Activated T-helper 1 cell treated with anti-CD3 and anti-CD28 coated beads, Interleukin-12 subunit alpha, Interleukin-12 subunit beta, Interleukin-2, Interleukin-4 antibody, amounts not matched to agents 30 ng/mL and 10 ng/mL and 1 ng/mL, durations not matched to agents 14 hours and 24 hours and 36 hours (primary cell): ENCODE measurements at regions of chrX and their contacts with region 1.

Region 1: GRCh38 chrX:78555401-78555980 is 103.6 kb downstream of the RTL3 start:
- DNase-seq: no peak
- H3K4me3 Mint-ChIP-seq: no peak overlapping the region
- H3K27ac Mint-ChIP-seq: peak overlapping the region; percentile 61
- H3K4me1 Mint-ChIP-seq: peaks cover 5% of the 10 kb centered on the region
- H3K27me3 Mint-ChIP-seq: no peaks in the 10 kb centered on the region

Region 2: GRCh38 chrX:78493180-78493579 is 62.3 kb before region 1 on chrX:
- intact Hi-C with region 1: no loop called
- DNase-seq: no peak
- H3K4me3 Mint-ChIP-seq: no peak overlapping the region
- H3K27ac Mint-ChIP-seq: no peak overlapping the region
- H3K4me1 Mint-ChIP-seq: peaks cover 6% of the 10 kb centered on the region
- H3K27me3 Mint-ChIP-seq: no peaks in the 10 kb centered on the region

Region 3: DNA sequence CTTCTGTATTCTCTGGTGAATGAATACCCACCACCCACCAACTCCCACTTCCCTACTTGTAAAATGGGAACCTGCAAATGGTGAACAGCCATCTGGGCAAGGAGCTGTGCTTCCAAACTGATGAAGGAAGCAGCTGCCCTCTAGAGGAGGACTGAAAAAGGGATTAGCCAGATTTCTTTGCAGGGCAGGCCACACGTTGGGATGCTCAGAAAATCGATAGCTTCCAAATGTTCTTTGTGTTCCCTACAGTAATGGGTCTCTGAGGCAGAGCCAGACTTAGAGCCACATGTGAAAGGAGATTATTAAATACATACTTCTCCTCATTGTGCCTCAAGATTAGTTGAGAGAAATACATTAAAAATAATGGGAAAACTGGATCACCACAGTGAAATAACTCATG is 152.8 kb after region 1 on chrX:
- intact Hi-C with region 1: loop called (anchors 5 kb)
- DNase-seq: no peak
- H3K4me3 Mint-ChIP-seq: no peak overlapping the region
- H3K27ac Mint-ChIP-seq: no peak overlapping the region
- H3K4me1 Mint-ChIP-seq: no peaks in the 10 kb centered on the region
- H3K27me3 Mint-ChIP-seq: no peaks in the 10 kb centered on the region

Region 4: DNA sequence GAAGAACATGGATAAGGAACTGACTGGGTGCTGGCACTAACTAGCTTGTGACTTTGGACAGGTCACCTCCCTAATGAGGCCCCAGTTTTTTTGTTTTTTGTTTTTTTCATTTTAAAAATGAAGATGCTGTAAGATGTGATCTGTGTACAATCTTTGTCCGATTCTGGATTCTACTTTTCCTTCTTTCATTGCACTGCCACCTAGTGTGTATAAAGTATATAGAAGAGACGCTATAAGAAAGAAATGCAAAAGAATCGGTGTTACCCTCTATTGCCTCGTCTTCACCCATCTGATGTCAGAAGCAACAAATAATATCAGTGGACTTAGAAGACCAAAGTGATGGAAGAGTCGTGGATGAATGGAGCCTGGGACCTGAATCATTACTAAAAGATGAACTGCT is 331.1 kb after region 1 on chrX:
- intact Hi-C with region 1: loop called (anchors 1 kb)
- DNase-seq: no peak
- H3K4me3 Mint-ChIP-seq: no peak overlapping the region
- H3K27ac Mint-ChIP-seq: no peak overlapping the region
- H3K4me1 Mint-ChIP-seq: peaks cover 9% of the 10 kb centered on the region
- H3K27me3 Mint-ChIP-seq: no peaks in the 10 kb centered on the region

Region 5: DNA sequence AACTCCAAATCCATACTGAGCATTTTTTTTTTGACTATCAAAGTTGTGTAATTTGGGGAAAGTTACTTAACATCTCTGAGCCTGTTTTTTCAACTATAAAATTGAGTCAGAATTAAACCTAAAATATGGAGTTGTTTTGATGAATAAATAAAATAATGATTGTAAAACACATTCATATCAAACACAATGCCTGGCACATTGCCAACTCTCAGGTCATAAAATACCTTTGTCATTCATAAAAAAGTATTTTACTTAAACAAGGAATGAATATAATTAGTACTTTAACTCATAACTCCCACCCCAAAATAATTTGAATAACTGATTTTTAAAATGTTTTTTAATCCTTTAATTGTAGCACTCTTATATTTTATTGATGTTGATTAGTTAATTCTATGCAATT is 585.2 kb after region 1 on chrX:
- intact Hi-C with region 1: loop called (anchors 5 kb)
- DNase-seq: no peak
- H3K4me3 Mint-ChIP-seq: no peak overlapping the region
- H3K27ac Mint-ChIP-seq: no peak overlapping the region
- H3K4me1 Mint-ChIP-seq: peaks cover 23% of the 10 kb centered on the region
- H3K27me3 Mint-ChIP-seq: no peaks in the 10 kb centered on the region

Region 6: DNA sequence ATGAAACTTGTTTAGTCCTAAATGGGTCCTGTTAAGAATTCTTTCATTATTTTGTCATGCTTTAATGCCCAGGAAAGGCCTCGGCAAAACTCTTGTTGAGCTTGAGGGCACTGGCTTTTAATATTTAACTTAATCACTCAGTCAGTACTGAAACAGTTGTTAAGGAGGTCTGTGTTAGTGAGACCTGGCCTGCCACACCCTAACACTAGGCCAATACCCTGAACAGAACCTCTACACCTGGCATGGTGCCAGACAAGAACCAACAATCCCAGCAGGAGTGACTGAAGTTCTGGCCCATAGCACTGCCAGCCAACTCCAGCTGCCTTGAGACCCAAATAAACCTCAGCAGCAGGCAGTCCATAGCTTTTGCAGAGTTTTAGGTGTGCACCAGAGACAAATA is 897.4 kb after region 1 on chrX:
- intact Hi-C with region 1: loop called (anchors 1 kb)
- DNase-seq: no peak
- H3K4me3 Mint-ChIP-seq: no peak overlapping the region
- H3K27ac Mint-ChIP-seq: no peak overlapping the region
- H3K4me1 Mint-ChIP-seq: peaks cover 8% of the 10 kb centered on the region
- H3K27me3 Mint-ChIP-seq: no peaks in the 10 kb centered on the region